ENCODE measurements at regions of chr20 and their contacts with region 1.

Region 1: DNA sequence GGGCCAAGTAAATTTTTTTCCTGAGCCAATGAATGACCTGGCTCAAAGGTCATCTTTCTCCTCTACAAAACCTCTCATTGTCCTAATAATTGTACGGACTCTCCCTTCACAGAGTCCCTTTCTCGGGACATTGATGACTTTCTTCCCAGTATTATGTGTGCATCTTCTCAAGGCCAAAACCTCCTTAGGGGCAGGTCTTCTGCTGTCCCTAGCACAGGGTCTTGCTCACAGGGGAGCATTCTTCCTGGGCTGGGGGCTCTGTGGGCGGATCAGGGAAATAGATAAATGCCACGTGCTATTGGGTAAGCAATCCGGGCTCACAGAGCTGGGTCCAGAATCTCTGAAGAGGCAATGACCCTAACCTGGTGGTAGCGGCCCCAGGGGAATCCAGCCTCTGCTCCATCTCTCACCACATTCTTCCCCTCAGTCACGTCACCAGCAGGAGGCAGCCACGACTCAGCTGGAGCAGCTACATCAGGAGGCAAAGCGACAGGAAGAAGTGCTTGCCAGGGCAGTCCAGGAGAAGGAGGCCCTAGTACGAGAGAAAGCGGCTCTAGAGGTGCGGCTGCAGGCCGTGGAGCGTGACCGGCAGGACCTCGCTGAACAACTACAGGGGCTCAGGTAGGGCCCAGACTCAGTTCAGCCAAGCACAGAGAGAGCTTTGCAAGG is 23.5 kb downstream of the CEP250 start:
- DNase-seq: no peak
- H3K4me3 ChIP-seq: no peak overlapping the region
- H3K27ac ChIP-seq: no peak overlapping the region
- H3K4me1 ChIP-seq: no peaks in the 10 kb centered on the region
- H3K27me3 ChIP-seq: no peaks in the 10 kb centered on the region
- CTCF ChIP-seq: no peak

Region 2: DNA sequence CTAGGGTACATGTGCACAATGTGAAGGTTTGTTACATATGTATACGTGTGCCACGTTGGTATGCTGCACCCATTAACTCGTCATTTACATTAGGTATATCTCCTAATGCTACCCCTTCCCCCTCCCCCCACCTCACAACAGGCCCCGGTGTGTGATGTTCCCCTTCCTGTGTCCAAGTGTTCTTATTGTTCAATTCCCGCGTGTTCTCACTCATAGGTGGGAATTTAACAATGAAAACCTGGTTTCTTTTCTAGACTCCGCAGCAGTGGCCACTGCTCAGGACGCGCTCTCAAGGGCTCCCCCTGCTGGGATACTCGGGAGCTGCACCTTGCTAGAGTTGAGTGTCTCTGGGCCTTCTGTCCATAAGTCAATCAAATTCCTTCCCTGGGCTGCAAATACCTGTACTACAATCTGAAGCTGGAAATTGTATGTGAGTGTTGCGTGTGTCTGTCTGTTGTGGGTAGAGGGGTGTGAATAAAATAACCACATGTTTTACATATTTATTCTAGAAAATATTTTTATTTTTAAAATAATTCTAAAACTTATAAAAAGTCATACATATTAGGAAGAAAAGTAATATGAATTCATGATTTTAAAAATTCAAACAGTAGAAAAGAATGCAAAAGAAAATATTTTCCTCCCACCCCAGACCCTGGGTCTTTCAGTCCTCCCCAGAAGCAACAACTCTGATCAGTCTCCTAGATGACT is 31.7 kb before region 1 on chr20:
- CTCF ChIA-PET with region 1: no interaction called
- POLR2A ChIA-PET with region 1: no interaction called
- intact Hi-C with region 1: no loop called
- DNase-seq: peak; percentile 59 to 91
- H3K4me3 ChIP-seq: no peak overlapping the region
- H3K27ac ChIP-seq: no peak overlapping the region
- H3K4me1 ChIP-seq: no peaks in the 10 kb centered on the region
- H3K27me3 ChIP-seq: no peaks in the 10 kb centered on the region
- CTCF ChIP-seq: peak; percentile 96

Region 3: DNA sequence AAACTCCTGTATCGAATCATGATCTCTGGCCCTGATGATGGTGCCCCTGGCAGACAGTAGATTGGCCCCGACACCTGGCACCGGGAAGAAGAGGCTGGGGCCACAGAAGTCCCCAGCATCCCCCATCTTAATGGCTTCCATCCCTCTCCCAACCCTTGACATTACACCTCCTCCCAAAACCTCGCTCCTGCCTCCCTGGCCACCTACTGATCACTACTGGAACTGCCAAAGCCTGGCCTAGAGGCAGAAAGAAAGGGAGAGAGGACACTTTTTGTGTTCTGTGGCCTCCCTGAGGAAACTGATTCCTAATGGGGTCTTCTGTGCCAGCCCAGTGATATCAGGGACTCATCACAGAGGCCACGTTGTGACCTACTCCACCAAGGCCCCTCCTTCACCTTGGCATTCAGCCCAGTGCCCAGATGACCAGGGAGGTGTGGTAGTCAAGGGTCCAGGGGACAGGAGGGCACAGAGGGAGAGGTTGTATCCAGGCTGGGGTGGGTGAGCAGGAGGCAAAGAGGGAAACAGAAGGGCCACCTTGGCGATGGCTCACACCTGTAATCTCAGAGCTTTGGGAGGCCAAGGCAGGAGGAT is 44.5 kb after region 1 on chr20:
- CTCF ChIA-PET with region 1: interaction called, 10 read pairs
- POLR2A ChIA-PET with region 1: no interaction called
- intact Hi-C with region 1: no loop called
- DNase-seq: peak in 1 of 2 experiments; percentile 27
- H3K4me3 ChIP-seq: no peak overlapping the region
- H3K27ac ChIP-seq: no peak overlapping the region
- H3K4me1 ChIP-seq: no peaks in the 10 kb centered on the region
- H3K27me3 ChIP-seq: no peaks in the 10 kb centered on the region
- CTCF ChIP-seq: peak; percentile 70

Region 4: DNA sequence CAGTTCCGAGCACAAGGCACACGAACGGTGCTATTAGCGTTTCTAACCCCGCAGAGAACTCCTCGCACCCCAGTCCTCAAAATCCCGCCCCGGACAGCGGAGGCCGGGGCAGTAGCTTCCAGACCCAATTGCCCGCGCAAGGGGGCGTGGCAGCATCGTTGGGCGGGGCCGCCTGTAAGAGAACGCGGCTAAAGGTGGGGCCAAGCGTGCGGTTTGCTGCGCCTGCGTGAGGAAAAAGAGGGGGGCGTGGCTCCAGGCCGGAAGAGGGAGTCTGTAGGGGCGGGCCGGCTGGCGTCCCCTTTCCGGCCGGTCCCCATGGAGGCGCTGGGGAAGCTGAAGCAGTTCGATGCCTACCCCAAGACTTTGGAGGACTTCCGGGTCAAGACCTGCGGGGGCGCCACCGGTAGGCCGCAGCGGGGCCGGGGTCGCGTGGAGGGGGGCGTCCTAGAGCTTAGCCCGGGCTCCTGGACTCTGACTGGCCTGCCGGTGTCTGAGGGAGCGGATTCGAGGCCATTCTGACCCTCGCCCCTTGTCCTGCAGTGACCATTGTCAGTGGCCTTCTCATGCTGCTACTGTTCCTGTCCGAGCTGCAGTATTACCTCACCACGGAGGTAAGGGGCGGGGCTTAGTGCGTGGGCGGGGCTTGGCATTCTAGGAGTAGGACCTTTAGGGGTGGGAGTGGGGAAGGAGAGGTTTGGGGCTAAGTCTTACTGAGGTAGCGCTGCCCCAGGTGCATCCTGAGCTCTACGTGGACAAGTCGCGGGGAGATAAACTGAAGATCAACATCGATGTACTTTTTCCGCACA is 63.0 kb after region 1 on chr20 and contains the start of gene ERGIC3:
- CTCF ChIA-PET with region 1: no interaction called
- POLR2A ChIA-PET with region 1: interaction called, 13 read pairs
- intact Hi-C with region 1: no loop called
- DNase-seq: peak; percentile 82 to 99
- H3K4me3 ChIP-seq: peak within 1 kb of the TSS; percentile 88
- H3K27ac ChIP-seq: peak within 1 kb of the TSS; percentile 64
- H3K4me1 ChIP-seq: peaks cover 7% of the 10 kb centered on the region
- H3K27me3 ChIP-seq: no peaks in the 10 kb centered on the region
- CTCF ChIP-seq: no peak; the same call in 1 of the 2 replicates
- total RNA-seq, gene ERGIC3: 341 and 435 TPM in 2 replicates